ENCODE measurements at regions of chr5 and their contacts with region 1.

Region 1: DNA sequence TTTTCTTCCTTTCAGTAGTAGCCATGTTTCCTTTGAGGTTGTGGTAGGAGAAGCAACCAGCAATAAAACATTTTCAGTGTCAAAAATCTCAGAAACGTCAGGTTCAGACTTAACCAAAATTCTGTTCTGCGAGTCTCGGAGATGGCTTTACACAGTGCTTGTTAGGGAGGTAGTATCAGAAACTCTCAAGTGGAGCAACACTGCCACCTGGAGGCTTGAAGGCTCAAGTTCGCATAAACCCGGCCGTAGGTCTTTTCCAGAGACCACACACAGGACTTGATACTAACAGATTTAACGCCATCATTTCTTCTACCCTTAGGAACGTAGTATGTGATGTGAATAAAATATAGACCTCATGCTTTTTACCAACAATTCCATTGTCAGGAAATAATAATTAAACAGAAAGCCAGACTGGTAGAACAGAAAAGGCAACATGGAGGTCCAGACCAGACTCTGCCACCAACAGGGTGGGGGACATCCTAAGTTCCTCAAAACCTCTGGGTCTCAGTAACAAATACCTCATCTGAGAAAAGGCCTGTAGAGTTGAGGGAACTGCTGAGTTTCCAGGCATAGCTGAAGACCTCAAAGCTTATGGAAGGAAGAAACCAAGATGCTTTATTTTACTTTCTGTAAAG is 8.5 kb downstream of the PTGER4 start:
- DNase-seq: peak; percentile 71
- ATAC-seq: peak; percentile 97
- H3K4me3 ChIP-seq: peak overlapping the region; percentile 88
- H3K27ac ChIP-seq: no peak overlapping the region
- H3K4me1 ChIP-seq: peaks cover 18% of the 10 kb centered on the region
- H3K27me3 ChIP-seq: no peaks in the 10 kb centered on the region
- CTCF ChIP-seq: peak; percentile 85

Region 2: DNA sequence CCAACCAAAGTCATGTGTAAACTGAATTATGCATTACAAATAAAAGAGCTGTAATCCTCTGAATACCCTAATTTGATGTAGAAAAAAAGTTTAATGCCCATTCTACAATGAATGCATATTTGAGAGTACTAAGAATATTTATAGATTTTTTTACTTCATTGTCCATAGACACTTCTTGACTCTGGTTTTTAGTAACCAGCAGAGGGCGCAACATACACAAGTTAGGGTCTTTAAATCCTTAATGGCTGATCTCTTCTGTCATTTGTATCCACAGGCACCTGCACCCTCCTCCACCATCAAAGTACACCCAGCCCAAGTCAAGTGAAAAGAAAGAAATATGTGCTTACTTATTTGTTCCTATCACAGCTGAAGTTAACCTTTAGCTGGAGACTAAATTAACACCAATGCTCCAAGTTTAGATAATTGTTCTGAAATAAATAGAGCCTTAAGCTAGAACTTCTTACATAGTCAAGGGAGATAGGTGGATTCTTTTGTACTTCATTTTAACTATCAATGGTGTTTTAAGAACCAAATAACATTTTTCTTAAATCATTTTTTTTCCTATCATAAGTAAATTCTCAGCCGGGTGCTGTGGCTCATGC is 739.3 kb before region 1 on chr5:
- intact Hi-C with region 1: loop called (anchors 10 kb)
- DNase-seq: no peak
- ATAC-seq: peak; percentile 89
- H3K4me3 ChIP-seq: no peak overlapping the region
- H3K27ac ChIP-seq: no peak overlapping the region
- H3K4me1 ChIP-seq: no peaks in the 10 kb centered on the region
- H3K27me3 ChIP-seq: no peaks in the 10 kb centered on the region
- CTCF ChIP-seq: peak; percentile 78

Region 3: DNA sequence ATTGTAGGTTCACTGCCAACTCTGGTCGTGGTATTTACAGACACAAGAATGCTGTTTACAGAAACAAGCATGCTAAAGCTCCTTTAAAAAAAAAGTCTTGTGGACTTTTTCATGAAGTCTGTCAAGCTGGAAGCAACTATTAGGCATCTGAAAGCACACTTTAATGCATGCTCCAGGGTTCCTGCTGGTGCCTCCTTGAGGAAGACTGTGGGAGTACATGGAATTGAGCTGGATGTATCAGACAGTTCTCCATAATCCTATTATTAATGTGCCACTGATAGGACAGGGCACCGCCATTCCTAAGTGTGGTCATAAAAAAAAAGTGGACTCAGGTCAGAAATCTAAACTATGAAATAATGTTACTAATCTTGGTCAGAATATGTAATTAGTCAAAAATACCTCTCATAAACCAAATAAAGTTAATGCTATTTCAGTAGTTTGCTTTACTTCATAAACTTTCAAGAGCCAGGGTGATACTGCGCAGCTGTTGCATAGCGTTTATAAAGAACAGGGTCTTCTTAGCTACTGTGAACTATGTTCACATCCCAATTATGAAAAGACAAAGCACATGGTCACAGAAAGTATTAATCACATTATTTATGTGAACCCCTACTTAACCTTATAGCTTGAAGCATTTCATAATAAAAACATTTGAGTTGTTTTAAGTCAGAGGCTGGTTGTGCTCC is 399.3 kb before region 1 on chr5:
- intact Hi-C with region 1: no loop called
- DNase-seq: no peak
- ATAC-seq: no peak
- H3K4me3 ChIP-seq: no peak overlapping the region
- H3K27ac ChIP-seq: no peak overlapping the region
- H3K4me1 ChIP-seq: no peaks in the 10 kb centered on the region
- H3K27me3 ChIP-seq: no peaks in the 10 kb centered on the region
- CTCF ChIP-seq: no peak

Region 4: GRCh38 chr5:40652441-40653220 is 35.6 kb before region 1 on chr5:
- intact Hi-C with region 1: no loop called
- DNase-seq: no peak
- ATAC-seq: no peak
- H3K4me3 ChIP-seq: no peak overlapping the region
- H3K27ac ChIP-seq: no peak overlapping the region
- H3K4me1 ChIP-seq: no peaks in the 10 kb centered on the region
- H3K27me3 ChIP-seq: no peaks in the 10 kb centered on the region
- CTCF ChIP-seq: no peak

Measured in upper lobe of right lung (tissue), 1 donor.